Activated CD4-positive, alpha-beta memory T cell treated with anti-CD3 and anti-CD28 coated beads, Interleukin-2, amount 10 ng/mL, durations not matched to agents 7 days and 5 days (primary cell): ENCODE measurements at regions of chr4 and their contacts with region 1.

Region 1: DNA sequence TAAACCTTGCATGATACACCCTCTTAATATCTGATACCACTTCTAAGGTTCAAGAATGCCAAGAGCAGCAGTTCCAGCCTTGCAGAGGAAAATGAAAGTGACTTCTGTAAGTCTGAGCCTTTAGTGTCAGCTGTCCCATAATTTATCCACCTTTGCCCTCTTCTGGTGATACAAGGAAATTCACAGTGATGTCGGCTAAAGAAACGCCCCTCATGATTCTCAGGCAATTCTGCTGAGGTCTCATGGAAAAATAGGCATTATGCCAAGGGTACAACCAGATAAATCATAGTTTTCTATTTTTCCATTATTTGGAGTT is 172.2 kb upstream of the CXCL13 start:
- DNase-seq: no peak
- H3K4me3 Mint-ChIP-seq: no peak overlapping the region
- H3K27ac Mint-ChIP-seq: peak overlapping the region; percentile 13
- H3K4me1 Mint-ChIP-seq: peaks cover 3% of the 10 kb centered on the region
- H3K27me3 Mint-ChIP-seq: no peaks in the 10 kb centered on the region

Region 2: GRCh38 chr4:77367638-77368037 is 65.7 kb before region 1 on chr4:
- CTCF ChIA-PET with region 1: interaction called, 11 read pairs
- POLR2A ChIA-PET with region 1: no interaction called
- DNase-seq: no peak
- H3K4me3 Mint-ChIP-seq: no peak overlapping the region
- H3K27ac Mint-ChIP-seq: no peak overlapping the region
- H3K4me1 Mint-ChIP-seq: no peaks in the 10 kb centered on the region
- H3K27me3 Mint-ChIP-seq: peaks cover 2% of the 10 kb centered on the region

Region 3: GRCh38 chr4:77385124-77385969 is 48.0 kb before region 1 on chr4:
- CTCF ChIA-PET with region 1: interaction called, 16 read pairs
- POLR2A ChIA-PET with region 1: no interaction called
- DNase-seq: peak; percentile 60
- H3K4me3 Mint-ChIP-seq: no peak overlapping the region
- H3K27ac Mint-ChIP-seq: no peak overlapping the region
- H3K4me1 Mint-ChIP-seq: no peaks in the 10 kb centered on the region
- H3K27me3 Mint-ChIP-seq: peaks cover 8% of the 10 kb centered on the region